Motor neuron (in vitro differentiated cells): ENCODE measurements at regions of chr1 and their contacts with region 1.

Region 1: DNA sequence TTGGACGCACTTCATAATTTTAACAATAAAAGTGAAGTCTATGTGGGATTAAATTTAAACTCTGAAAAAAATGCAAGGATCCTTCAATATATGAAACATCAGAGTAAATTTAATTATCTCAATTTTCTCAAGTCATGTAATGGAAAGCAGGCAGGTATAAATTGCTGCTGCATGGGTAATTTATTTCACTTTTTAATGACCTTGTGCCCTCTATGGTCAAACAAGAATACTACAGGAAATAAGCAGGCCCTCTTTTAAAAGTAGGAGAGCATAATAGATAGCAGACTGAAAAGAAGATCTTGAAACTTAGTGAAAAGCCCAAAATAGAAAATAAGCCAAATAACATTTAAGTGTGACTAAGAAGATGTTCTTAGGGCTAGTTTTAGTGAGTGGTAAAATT is 22.9 kb downstream of the BCAS2 start:
- ATAC-seq: peak in 2 of 8 experiments; percentile 37 to 42
- H3K4me3 ChIP-seq: no peak overlapping the region
- H3K27ac ChIP-seq: no peak overlapping the region
- H3K4me1 ChIP-seq: no peaks in the 10 kb centered on the region

Region 2: GRCh38 chr1:113593550-113594297 is 964.8 kb before region 1 on chr1:
- in situ Hi-C with region 1: no loop called
- ATAC-seq: peak in 1 of 8 experiments; percentile 78
- H3K4me3 ChIP-seq: no peak overlapping the region
- H3K27ac ChIP-seq: no peak overlapping the region
- H3K4me1 ChIP-seq: no peaks in the 10 kb centered on the region

Region 3: DNA sequence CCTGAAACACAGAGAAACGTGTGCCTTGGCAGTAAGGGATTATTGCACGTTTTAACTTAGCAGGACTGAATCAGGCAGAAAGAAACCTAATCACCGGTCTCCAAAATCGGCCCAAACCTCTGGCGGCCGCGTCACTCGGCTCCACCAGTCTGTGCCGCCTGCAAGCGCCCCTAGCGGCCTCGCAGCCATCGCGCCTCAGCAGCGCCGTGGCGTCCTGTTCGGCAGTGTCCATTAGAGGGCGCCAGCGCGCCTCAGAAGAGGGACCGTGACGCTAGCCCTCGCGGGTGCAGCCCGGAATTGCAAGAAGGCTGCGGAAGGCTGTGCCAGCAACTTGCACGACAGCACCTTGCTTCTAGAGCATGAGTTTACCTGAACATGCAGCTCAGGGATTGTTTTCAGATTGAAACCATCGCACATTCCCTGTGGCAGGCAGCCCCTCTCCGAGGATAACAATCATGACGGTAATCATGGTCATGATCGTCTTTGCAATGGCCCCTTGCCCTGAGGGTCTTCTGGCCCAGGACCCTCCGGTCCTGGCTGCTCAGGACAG is 212.0 kb before region 1 on chr1:
- in situ Hi-C with region 1: loop called in 1 of 9 experiments (anchors 25 kb)
- ATAC-seq: peak; percentile 94 to 100 (median 100)
- H3K4me3 ChIP-seq: peak overlapping the region; percentile 11 to 32 (median 20)
- H3K27ac ChIP-seq: no peak overlapping the region
- H3K4me1 ChIP-seq: peaks cover 0 to 5% of the 10 kb centered on the region in 2 donors